ENCODE measurements at regions of chr11 and their contacts with region 1.

Region 1: GRCh38 chr11:72030472-72031045 is 31.9 kb downstream of the IL18BP start:
- DNase-seq: no peak
- ATAC-seq: no peak
- H3K4me3 ChIP-seq: no peak overlapping the region
- H3K4me3 Mint-ChIP-seq: no peak overlapping the region
- H3K27ac ChIP-seq: peak overlapping the region in 1 of 2 donors; percentile 52
- H3K27ac Mint-ChIP-seq: peak overlapping the region; percentile 11
- H3K4me1 ChIP-seq: peaks cover 0 to 2% of the 10 kb centered on the region in 2 donors
- H3K4me1 Mint-ChIP-seq: peaks cover 35% of the 10 kb centered on the region
- H3K27me3 ChIP-seq: no peaks in the 10 kb centered on the region
- H3K27me3 Mint-ChIP-seq: no peaks in the 10 kb centered on the region
- CTCF ChIP-seq: no peak

Region 2: GRCh38 chr11:72015511-72016171 is 14.9 kb before region 1 on chr11:
- CTCF ChIA-PET with region 1: interaction called, 36 read pairs
- POLR2A ChIA-PET with region 1: no interaction called
- intact Hi-C with region 1: no loop called
- DNase-seq: peak; percentile 44
- ATAC-seq: no peak
- H3K4me3 ChIP-seq: no peak overlapping the region
- H3K4me3 Mint-ChIP-seq: no peak overlapping the region
- H3K27ac ChIP-seq: no peak overlapping the region
- H3K27ac Mint-ChIP-seq: peak overlapping the region; percentile 46
- H3K4me1 ChIP-seq: no peaks in the 10 kb centered on the region
- H3K4me1 Mint-ChIP-seq: no peaks in the 10 kb centered on the region
- H3K27me3 ChIP-seq: no peaks in the 10 kb centered on the region
- H3K27me3 Mint-ChIP-seq: no peaks in the 10 kb centered on the region
- CTCF ChIP-seq: peak; percentile 29

Region 3: GRCh38 chr11:72080256-72080974 is 49.9 kb after region 1 on chr11 and contains the starts of genes LRRC51 and NUMA1:
- CTCF ChIA-PET with region 1: interaction called, 49 read pairs
- POLR2A ChIA-PET with region 1: no interaction called
- intact Hi-C with region 1: no loop called
- DNase-seq: peak; percentile 100
- ATAC-seq: peak; percentile 90
- H3K4me3 ChIP-seq: peak within 1 kb of the TSS; percentile 61 to 84 (median 77)
- H3K4me3 Mint-ChIP-seq: peak within 1 kb of the TSS; percentile 87
- H3K27ac ChIP-seq: peak within 1 kb of the TSS; percentile 78 to 90
- H3K27ac Mint-ChIP-seq: peak within 1 kb of the TSS; percentile 87
- H3K4me1 ChIP-seq: peaks cover 15 to 23% of the 10 kb centered on the region in 2 donors
- H3K4me1 Mint-ChIP-seq: peaks cover 41% of the 10 kb centered on the region
- H3K27me3 ChIP-seq: no peaks in the 10 kb centered on the region
- H3K27me3 Mint-ChIP-seq: no peaks in the 10 kb centered on the region
- CTCF ChIP-seq: no peak
- total RNA-seq, gene LRRC51: 5.5 and 7.7 TPM in 2 replicates
- total RNA-seq, gene NUMA1: 297 and 300 TPM in 2 replicates

Region 4: GRCh38 chr11:72091005-72091691 is 60.6 kb after region 1 on chr11:
- CTCF ChIA-PET with region 1: interaction called, 292 read pairs
- POLR2A ChIA-PET with region 1: no interaction called
- intact Hi-C with region 1: no loop called
- DNase-seq: peak; percentile 85
- ATAC-seq: peak; percentile 99
- H3K4me3 ChIP-seq: no peak overlapping the region
- H3K4me3 Mint-ChIP-seq: no peak overlapping the region
- H3K27ac ChIP-seq: peak overlapping the region; percentile 7 to 25
- H3K27ac Mint-ChIP-seq: peak overlapping the region; percentile 73
- H3K4me1 ChIP-seq: peaks cover 7 to 14% of the 10 kb centered on the region in 2 donors
- H3K4me1 Mint-ChIP-seq: peaks cover 16% of the 10 kb centered on the region
- H3K27me3 ChIP-seq: no peaks in the 10 kb centered on the region
- H3K27me3 Mint-ChIP-seq: no peaks in the 10 kb centered on the region
- CTCF ChIP-seq: peak; percentile 82

Region 5: GRCh38 chr11:72141066-72141465 is 110.5 kb after region 1 on chr11:
- CTCF ChIA-PET with region 1: interaction called, 215 read pairs
- POLR2A ChIA-PET with region 1: no interaction called
- intact Hi-C with region 1: loop called (anchors 1 kb)
- DNase-seq: no peak
- ATAC-seq: no peak
- H3K4me3 ChIP-seq: no peak overlapping the region
- H3K4me3 Mint-ChIP-seq: no peak overlapping the region
- H3K27ac ChIP-seq: no peak overlapping the region
- H3K27ac Mint-ChIP-seq: no peak overlapping the region
- H3K4me1 ChIP-seq: no peaks in the 10 kb centered on the region
- H3K4me1 Mint-ChIP-seq: no peaks in the 10 kb centered on the region
- H3K27me3 ChIP-seq: peaks cover 0 to 3% (median 0%) of the 10 kb centered on the region in 4 experiments
- H3K27me3 Mint-ChIP-seq: peaks cover 19% of the 10 kb centered on the region
- CTCF ChIP-seq: no peak

Region 6: GRCh38 chr11:72413914-72414628 is 383.5 kb after region 1 on chr11:
- CTCF ChIA-PET with region 1: interaction called, 9 read pairs
- POLR2A ChIA-PET with region 1: no interaction called
- intact Hi-C with region 1: loop called (anchors 1 kb)
- DNase-seq: peak; percentile 81
- ATAC-seq: no peak
- H3K4me3 ChIP-seq: no peak overlapping the region
- H3K4me3 Mint-ChIP-seq: no peak overlapping the region
- H3K27ac ChIP-seq: no peak overlapping the region
- H3K27ac Mint-ChIP-seq: peak overlapping the region; percentile 60
- H3K4me1 ChIP-seq: peaks cover 12 to 27% of the 10 kb centered on the region in 2 donors
- H3K4me1 Mint-ChIP-seq: peaks cover 43% of the 10 kb centered on the region
- H3K27me3 ChIP-seq: no peaks in the 10 kb centered on the region
- H3K27me3 Mint-ChIP-seq: no peaks in the 10 kb centered on the region
- CTCF ChIP-seq: peak; percentile 81

Measured in B cell (primary cell).